Right ventricle myocardium inferior (tissue), 1 donor: ENCODE measurements at regions of chr18 and their contacts with region 1.

Region 1: GRCh38 chr18:43620936-43621335 is 343.6 kb upstream of the SYT4 start:
- DNase-seq: no peak
- ATAC-seq: no peak

Region 2: DNA sequence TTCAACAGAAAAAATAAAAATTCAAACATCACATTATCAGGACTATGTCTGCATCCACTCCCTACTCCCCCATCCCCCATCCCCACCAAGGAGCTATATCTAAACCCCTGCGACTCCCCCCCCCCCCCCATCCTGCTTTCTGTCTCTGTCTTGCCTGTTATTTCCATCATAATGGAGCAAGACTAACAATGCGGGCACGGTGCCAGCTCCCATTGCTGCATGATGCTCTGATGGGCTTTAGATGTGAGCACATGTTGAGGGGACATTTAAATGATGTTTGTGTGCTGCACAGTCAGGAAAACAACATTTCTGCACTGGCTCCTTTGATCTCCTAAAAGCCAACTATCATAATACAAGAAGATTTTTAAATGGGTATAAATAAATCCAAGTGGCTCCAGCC is 415.6 kb after region 1 on chr18:
- intact Hi-C with region 1: no loop called
- DNase-seq: peak; percentile 47
- ATAC-seq: no peak

Region 3: GRCh38 chr18:44325903-44326635 is 705.1 kb after region 1 on chr18:
- intact Hi-C with region 1: loop called (anchors 10 kb)
- DNase-seq: no peak
- ATAC-seq: no peak

Region 4: DNA sequence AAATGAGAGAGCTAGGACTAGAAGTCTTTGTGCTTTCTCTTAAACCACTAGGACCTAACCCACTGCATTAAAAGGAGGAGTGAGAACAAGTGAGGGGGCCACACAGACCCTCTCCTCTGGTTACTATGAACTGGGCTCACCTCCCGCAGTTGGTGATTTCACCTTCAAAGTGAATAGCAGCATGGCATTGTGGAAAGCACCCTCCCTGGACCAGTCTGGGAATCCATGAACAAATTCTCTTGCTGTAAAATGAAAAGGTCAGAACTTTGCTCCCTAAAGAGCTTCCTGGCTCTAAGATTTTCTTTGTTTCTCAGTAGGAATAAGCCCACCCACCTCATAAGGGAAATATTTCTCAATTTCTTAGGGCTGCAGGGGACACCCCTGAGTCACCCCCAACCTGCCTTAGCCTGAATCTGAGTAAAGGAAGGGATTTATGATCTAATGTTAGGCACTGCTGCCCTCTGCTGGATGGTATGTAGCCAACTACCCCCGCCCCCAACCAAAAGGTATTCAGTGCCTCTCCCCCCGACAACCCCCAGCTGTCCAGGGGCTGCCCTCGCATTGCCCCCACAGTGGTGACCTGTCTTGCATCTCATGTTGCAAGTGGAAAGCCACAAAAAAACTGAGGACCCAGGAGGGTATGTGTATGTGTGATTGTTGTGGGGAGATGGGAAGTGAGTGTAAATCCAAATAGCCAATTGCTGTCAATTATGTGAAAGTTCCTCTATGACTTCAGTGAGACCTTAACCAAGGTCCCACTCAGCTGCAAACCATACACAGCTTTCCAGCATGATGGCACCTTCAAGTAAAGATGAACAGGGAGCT is 1763.4 kb after region 1 on chr18:
- intact Hi-C with region 1: loop called (anchors 10 kb)
- DNase-seq: no peak
- ATAC-seq: peak; percentile 79